ENCODE measurements at regions of chr11 and their contacts with region 1.

Region 1: DNA sequence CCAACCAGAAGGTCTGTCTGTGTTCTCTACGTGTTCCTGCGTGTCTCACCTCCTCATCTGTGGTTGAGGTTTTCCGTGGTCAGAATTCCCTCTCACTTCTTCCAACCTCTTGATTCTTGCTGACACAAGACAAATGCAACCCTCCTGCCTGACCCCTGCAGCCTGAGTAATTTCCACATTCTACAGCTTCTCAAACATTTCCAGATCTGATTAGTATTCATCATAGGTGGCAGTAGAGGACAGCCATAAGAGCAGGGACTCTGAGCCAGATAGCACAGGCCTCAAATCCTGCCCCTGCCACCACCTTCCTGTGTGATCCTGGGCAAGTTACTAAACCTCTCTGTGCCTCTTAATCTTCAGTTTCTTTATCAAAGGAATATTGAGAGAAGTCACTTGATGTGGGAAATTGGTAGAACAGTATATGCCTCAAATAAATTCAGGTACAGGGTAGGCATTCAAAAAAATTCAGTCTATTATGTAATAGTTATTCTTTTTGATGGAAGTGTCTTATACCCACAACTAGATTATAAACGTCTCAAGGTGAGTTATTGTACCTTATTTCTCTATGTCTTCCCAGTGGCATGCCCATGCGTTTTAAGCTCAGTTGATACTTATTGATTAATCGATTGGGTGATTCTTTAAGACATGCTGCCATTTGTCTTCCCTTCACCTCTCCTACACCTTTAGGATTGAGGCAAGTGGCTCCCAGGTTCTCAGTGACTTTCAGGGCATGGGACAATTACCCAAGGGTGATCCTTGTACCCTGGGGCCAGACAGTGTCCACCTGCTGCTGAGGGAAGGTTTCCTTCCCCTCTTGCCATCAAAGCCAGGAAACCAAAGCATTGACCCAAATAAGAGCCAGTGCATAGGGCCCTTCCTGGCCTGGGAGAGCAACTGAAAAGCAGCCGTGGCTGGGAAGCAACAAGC is 19.6 kb downstream of the POU2AF1 start:
- DNase-seq: no peak
- H3K4me3 ChIP-seq: no peak overlapping the region
- H3K27ac ChIP-seq: no peak overlapping the region
- H3K4me1 ChIP-seq: no peaks in the 10 kb centered on the region
- H3K27me3 ChIP-seq: no peaks in the 10 kb centered on the region
- CTCF ChIP-seq: no peak
- EP300 ChIP-seq: no peak
- POLR2A ChIP-seq: no peak

Region 2: GRCh38 chr11:111137846-111138245 is 221.6 kb before region 1 on chr11:
- intact Hi-C with region 1: no loop called
- DNase-seq: no peak
- H3K4me3 ChIP-seq: no peak overlapping the region
- H3K27ac ChIP-seq: no peak overlapping the region
- H3K4me1 ChIP-seq: no peaks in the 10 kb centered on the region
- H3K27me3 ChIP-seq: no peaks in the 10 kb centered on the region
- CTCF ChIP-seq: no peak
- EP300 ChIP-seq: no peak
- POLR2A ChIP-seq: no peak

Region 3: DNA sequence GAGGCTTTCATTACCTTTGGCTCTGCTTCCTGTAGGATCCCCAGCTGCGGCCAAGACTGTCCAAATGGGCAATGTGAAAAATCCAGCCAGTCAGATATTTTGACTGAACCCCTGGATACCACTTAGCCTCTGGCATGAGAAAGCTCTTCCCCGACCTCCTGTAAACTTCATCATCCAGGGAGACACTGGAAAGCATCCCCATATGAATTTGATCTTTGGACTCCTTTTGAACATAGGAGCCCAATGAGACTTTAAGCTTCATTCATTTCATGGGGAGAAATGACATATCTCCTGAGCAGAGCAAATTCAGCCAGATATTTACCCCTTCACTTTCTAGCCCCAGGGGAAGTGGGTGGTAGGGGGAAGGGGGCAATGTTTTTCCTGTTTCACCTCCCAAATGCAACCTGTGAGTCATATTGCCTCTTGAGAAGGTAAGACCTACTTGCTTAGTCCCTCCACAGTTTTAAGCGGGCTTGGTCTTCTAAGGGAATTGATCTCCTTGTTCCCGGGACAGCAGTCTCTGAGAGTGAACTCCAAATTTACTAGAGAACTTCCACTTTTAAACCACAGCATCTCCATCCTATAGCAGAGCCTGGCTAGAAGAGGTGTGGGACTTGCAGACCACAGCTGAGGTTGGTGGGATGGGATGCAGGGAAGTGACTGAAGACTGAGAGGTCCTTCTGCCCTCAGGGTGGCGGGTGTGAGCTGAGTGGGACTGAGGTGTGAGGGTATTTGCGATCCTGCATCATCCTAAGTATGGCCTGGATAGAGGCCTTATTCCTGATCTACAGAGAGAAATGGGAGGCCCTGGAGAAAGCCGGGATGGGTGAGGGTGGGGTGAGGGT is 39.9 kb after region 1 on chr11:
- intact Hi-C with region 1: loop called in 1 of 4 experiments (anchors 5 kb)
- DNase-seq: no peak
- H3K4me3 ChIP-seq: no peak overlapping the region
- H3K27ac ChIP-seq: no peak overlapping the region
- H3K4me1 ChIP-seq: no peaks in the 10 kb centered on the region
- H3K27me3 ChIP-seq: no peaks in the 10 kb centered on the region
- CTCF ChIP-seq: no peak
- EP300 ChIP-seq: no peak
- POLR2A ChIP-seq: no peak

Measured in ovary (tissue), 10 donors.